Gastrocnemius medialis (tissue), 4 donors: ENCODE measurements at regions of chr10 and their contacts with region 1.

Region 1: DNA sequence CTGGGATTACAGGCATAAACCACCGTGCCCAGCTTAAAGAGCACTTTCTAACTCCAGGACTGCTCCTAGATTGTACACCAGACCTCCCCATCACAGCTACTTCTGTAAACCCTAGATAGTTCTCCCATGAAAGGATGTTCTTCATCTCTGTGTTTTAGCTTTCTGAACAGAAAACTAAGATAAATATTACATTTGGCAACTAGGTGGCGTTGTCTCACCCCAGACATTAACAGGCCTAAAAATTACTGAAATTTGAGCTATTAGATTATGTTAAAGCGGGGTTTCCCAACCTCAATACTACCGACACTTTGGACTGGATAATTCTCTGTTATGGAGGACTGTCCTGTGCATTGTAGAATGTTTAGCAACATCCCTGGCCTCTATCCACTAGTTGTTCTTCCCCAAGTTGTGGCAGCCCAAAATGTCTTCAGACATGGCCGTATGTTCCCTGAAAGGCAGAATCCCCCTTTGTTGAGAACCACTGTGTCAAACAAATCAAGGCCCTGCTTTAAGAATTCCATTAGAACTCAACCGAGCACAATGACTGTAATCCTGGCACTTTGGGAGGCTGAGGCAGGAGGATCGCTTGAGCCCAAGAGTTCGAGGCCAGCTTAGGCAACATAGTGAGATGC is 19.1 kb downstream of the ATOH7 start:
- DNase-seq: no peak
- ATAC-seq: no peak
- H3K4me3 ChIP-seq: no peak overlapping the region
- H3K27ac ChIP-seq: no peak overlapping the region
- H3K4me1 ChIP-seq: no peaks in the 10 kb centered on the region
- H3K27me3 ChIP-seq: no peaks in the 10 kb centered on the region
- CTCF ChIP-seq: peak; percentile 25 to 42 (median 33)
- POLR2A ChIP-seq: no peak

Region 2: GRCh38 chr10:68163735-68164134 is 49.1 kb before region 1 on chr10:
- in situ Hi-C with region 1: no loop called
- intact Hi-C with region 1: no loop called
- DNase-seq: no peak
- ATAC-seq: peak in 1 of 2 donors; percentile 17
- H3K4me3 ChIP-seq: no peak overlapping the region
- H3K27ac ChIP-seq: peak overlapping the region in 2 of 4 donors; percentile 38 to 46
- H3K4me1 ChIP-seq: peaks cover 0 to 2% of the 10 kb centered on the region in 2 donors
- H3K27me3 ChIP-seq: no peaks in the 10 kb centered on the region
- CTCF ChIP-seq: no peak
- POLR2A ChIP-seq: no peak

Region 3: DNA sequence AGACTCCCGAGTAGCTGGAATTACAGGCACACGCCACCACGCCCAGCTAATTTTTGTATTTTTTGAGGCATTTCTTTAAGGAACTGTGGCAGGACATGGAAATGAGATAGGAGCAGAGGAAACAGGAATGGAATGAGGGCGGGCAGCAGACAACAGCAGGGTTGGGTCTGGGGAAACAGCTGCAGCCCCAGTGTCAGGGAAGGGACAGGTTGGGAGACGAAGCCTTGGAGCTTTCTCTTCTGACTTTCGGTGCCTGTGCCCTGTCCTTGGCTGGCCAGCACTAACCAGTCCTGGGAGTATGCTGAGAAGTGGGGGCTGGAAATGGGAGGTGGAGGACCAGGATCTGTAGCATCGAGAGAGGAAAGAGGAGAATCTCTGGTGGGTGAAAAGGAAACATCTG is 28.3 kb before region 1 on chr10:
- in situ Hi-C with region 1: no loop called
- intact Hi-C with region 1: no loop called
- DNase-seq: no peak
- ATAC-seq: no peak
- H3K4me3 ChIP-seq: no peak overlapping the region
- H3K27ac ChIP-seq: peak overlapping the region; percentile 30 to 55 (median 46)
- H3K4me1 ChIP-seq: no peaks in the 10 kb centered on the region
- H3K27me3 ChIP-seq: no peaks in the 10 kb centered on the region
- CTCF ChIP-seq: no peak
- POLR2A ChIP-seq: no peak

Region 4: GRCh38 chr10:68346774-68347173 is 133.9 kb after region 1 on chr10:
- in situ Hi-C with region 1: no loop called
- intact Hi-C with region 1: loop called (anchors 1 kb)
- DNase-seq: no peak
- ATAC-seq: no peak
- H3K4me3 ChIP-seq: no peak overlapping the region
- H3K27ac ChIP-seq: peak overlapping the region in 1 of 4 donors; percentile 7
- H3K4me1 ChIP-seq: no peaks in the 10 kb centered on the region
- H3K27me3 ChIP-seq: no peaks in the 10 kb centered on the region
- CTCF ChIP-seq: no peak
- POLR2A ChIP-seq: no peak